ENCODE measurements at regions of chr12 and their contacts with region 1.

Region 1: DNA sequence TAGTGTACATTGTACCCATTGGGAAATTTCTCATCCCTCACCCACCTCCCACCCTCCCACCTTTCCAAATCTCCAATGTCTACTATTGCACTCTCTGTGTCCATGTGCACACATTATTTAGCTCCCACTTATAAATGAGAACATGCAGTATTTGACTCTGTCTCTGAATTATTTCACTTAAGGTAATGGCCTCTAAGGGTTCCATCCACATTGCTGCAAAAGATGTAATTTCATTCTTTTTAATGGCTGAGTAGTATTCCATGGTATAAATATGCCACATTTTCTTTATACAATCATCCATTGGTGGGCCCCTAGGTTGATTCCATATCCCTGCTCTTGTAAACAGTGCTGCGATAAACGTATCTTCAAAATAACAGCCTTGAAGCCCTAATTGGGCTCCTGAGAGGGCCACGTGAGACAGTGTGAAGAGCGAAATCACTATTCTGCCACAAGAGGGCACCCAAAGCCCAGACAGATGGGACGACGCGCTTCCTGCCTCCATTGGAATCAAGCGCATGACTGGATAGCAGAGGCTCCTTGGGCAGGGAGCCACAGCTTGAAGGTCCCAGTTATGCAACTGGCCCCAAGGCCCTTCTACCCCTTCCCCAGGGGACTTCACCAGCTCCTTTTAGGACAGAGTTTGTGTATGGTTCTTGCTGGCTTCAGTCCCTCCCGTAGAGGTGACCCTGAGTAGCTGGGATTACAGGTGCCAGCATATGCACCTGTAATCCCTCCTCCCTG is 21.3 kb upstream of the CD27 start:
- DNase-seq: peak; percentile 76 to 83 (median 82)
- ATAC-seq: peak; percentile 99 to 100 (median 100)
- H3K4me3 ChIP-seq: no peak overlapping the region
- H3K27ac ChIP-seq: no peak overlapping the region
- H3K4me1 ChIP-seq: no peaks in the 10 kb centered on the region
- H3K27me3 ChIP-seq: no peaks in the 10 kb centered on the region
- CTCF ChIP-seq: peak; percentile 90 to 93 (median 92)
- POLR2A ChIP-seq: no peak

Region 2: DNA sequence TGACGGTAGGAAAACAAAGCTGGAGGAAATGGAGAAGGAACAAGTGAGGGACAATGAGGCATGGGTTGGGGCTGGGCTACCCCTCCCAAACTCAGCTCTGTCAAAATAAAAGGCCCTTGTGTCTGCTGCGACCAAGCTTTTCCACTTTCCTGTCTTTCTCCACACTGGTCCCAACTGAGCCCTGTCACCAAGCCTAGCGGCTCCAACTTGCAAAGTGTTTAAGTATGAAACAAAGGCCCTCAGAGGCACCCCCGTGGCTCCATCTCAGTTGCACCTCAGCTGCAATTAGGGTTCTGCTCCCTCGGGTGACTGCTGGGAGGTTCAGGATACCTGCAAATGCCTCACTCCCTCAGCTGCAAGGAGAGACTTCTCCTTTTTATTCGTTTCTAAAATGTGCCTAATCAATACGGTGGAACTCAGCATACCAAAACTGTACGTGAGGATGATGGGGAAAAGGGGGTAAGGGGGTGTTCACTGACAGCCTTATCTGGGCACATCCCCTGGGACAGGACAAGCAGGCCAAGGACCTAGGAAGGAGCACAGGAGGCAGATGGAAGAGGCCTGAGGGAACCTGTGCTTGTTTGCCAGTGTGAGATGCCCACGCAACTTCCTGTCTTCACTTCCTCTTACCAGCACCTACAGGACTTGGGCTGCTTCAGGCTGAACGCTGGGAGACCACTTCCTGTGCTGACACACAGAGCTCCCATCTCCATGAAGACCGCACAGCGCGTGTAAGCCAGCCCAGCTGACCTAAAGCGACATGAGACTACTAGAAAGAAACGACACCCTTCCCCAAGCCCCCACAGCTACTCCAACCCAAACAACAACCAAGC is 38.2 kb after region 1 on chr12:
- intact Hi-C with region 1: loop called in 1 of 2 experiments (anchors 5 kb)
- DNase-seq: peak in 2 of 3 donors; percentile 55 to 69
- ATAC-seq: peak; percentile 36 to 61 (median 58)
- H3K4me3 ChIP-seq: no peak overlapping the region
- H3K27ac ChIP-seq: peak overlapping the region in 2 of 3 donors; percentile 19 to 43
- H3K4me1 ChIP-seq: no peaks in the 10 kb centered on the region
- H3K27me3 ChIP-seq: no peaks in the 10 kb centered on the region
- CTCF ChIP-seq: no peak
- POLR2A ChIP-seq: no peak

Region 3: GRCh38 chr12:6540181-6540877 is 116.9 kb after region 1 on chr12:
- intact Hi-C with region 1: loop called in 1 of 2 experiments (anchors 10 kb)
- DNase-seq: peak; percentile 71 to 75 (median 75)
- ATAC-seq: peak; percentile 10 to 38 (median 13)
- H3K4me3 ChIP-seq: no peak overlapping the region
- H3K27ac ChIP-seq: peak overlapping the region in 2 of 3 donors; percentile 9 to 87
- H3K4me1 ChIP-seq: peaks cover 5 to 39% (median 17%) of the 10 kb centered on the region in 4 donors
- H3K27me3 ChIP-seq: no peaks in the 10 kb centered on the region
- CTCF ChIP-seq: no peak
- POLR2A ChIP-seq: no peak